ENCODE measurements at regions of chr10 and their contacts with region 1.

Region 1: GRCh38 chr10:104925232-104925851 is 284.3 kb downstream of the SORCS3 start:
- DNase-seq: peak in 3 of 10 donors; percentile 45 to 53 (median 49)
- H3K4me3 ChIP-seq: no peak overlapping the region
- H3K27ac ChIP-seq: no peak overlapping the region
- H3K27me3 ChIP-seq: no peaks in the 10 kb centered on the region
- CTCF ChIP-seq: peak; percentile 37 to 78 (median 64)

Region 2: GRCh38 chr10:104601166-104601565 is 324.2 kb before region 1 on chr10:
- intact Hi-C with region 1: no loop called
- DNase-seq: no peak
- H3K4me3 ChIP-seq: no peak overlapping the region
- H3K27ac ChIP-seq: no peak overlapping the region
- H3K27me3 ChIP-seq: peaks cover 0 to 5% (median 0%) of the 10 kb centered on the region in 45 donors
- CTCF ChIP-seq: no peak

Region 3: GRCh38 chr10:104642658-104643302 is 282.6 kb before region 1 on chr10:
- intact Hi-C with region 1: loop called (anchors 5 kb)
- DNase-seq: peak; percentile 42 to 90 (median 82)
- H3K4me3 ChIP-seq: peak overlapping the region; percentile 29 to 73 (median 55)
- H3K27ac ChIP-seq: peak overlapping the region in 25 of 59 donors; percentile 13 to 74 (median 39)
- H3K27me3 ChIP-seq: peaks cover 0 to 54% (median 26%) of the 10 kb centered on the region in 45 donors
- CTCF ChIP-seq: peak; percentile 19 to 78 (median 64)

Region 4: DNA sequence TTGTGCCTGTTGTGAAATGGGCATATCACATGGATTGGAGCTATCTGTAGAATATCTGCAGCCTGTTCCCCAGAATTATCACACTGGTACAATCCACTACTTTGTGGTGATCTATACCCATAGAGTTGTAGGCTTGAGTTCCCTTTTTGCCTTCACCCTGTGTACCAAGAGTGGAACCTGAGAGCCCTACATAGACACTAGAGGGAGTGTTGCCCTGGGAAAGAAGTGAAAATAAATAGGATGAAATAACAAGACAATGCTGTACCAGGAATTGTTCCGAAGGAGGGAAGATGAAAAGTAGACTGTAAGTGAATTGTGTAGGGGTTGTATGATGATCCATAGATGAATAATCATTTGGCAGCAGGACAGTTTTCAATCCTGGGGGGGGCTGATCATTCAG is 275.3 kb before region 1 on chr10:
- intact Hi-C with region 1: loop called in 1 of 2 experiments (anchors 5 kb)
- DNase-seq: no peak
- H3K4me3 ChIP-seq: no peak overlapping the region
- H3K27ac ChIP-seq: no peak overlapping the region
- H3K27me3 ChIP-seq: no peaks in the 10 kb centered on the region
- CTCF ChIP-seq: peak; percentile 36 to 79 (median 62)

Region 5: DNA sequence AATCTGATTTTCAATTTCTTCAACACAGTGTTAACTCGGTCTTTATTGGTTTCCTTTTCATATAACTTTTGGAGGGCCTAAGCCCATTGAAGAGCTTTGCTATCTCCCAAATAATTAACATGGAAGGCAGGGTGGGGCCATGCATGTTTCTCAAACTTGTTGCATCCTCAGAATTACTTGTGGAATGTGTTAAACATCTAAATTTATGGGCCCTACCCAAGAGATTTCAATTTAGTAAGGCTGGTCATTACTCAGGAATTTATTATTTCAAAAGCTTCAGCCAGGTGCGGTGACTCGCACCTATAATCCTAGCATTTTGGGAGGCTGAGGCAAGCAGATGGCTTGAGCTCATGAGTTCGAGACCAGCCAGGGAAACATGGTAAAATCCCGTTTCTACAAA is 75.3 kb before region 1 on chr10:
- intact Hi-C with region 1: no loop called
- DNase-seq: no peak
- H3K4me3 ChIP-seq: no peak overlapping the region
- H3K27ac ChIP-seq: no peak overlapping the region
- H3K27me3 ChIP-seq: no peaks in the 10 kb centered on the region
- CTCF ChIP-seq: no peak

Region 6: GRCh38 chr10:105138358-105138757 is 213.0 kb after region 1 on chr10:
- intact Hi-C with region 1: no loop called
- DNase-seq: peak in 4 of 10 donors; percentile 14 to 36 (median 31)
- H3K4me3 ChIP-seq: no peak overlapping the region
- H3K27ac ChIP-seq: no peak overlapping the region
- H3K27me3 ChIP-seq: no peaks in the 10 kb centered on the region
- CTCF ChIP-seq: no peak